Activated CD4-positive, alpha-beta T cell treated with anti-CD3 and anti-CD28 coated beads, Interleukin-2, amount 10 ng/mL, durations not matched to agents 24 days and 14 days (primary cell): ENCODE measurements at regions of chr2 and their contacts with region 1.

Region 1: DNA sequence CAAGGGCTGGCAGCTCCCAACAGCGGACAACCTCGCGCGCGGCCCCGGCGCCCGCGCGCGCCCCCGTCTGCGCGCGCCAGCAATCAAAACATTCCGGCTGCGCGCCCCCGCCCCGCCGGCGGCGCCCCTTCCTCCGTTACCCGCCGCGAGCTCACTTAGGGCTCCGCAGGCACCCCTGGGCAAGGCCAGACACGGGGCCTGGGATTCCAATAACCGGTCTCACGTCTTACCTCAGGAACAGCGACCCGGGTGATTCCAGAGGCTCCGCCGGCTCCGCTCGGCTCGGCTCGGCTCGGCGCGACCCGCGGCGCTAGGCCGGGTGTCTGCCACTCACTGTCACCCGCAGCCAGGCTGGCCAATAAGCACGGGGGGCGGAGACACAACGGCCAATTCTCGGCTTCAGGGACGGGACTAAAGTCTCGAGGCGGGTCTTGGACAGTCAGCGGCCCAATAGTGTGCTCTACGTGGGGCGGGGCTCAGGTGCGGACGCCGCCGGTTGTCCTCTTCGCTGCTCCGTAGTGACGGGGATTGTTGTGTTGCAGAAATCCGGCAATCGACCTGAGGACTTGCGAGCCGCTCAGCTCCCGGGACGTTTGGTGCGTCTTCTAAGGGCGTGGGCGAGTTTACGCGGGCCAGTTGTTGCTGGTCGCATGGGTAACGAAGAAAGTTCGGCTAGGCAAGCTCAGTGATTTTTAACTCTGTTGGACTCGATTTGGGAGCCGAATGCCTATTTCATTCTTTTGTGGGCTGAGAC is at the starts of genes ANKZF1 and ATG9A:
- DNase-seq: peak; percentile 100
- H3K4me3 Mint-ChIP-seq: peak within 1 kb of the TSS; percentile 92
- H3K27ac Mint-ChIP-seq: peak within 1 kb of the TSS; percentile 98
- H3K4me1 Mint-ChIP-seq: peaks cover 43% of the 10 kb centered on the region
- H3K27me3 Mint-ChIP-seq: no peaks in the 10 kb centered on the region
- total RNA-seq, gene ANKZF1: 144 and 149 TPM in 2 replicates
- total RNA-seq, gene ATG9A: 61.6 and 67.2 TPM in 2 replicates

Region 2: GRCh38 chr2:219206442-219207253 is 22.8 kb before region 1 on chr2 and contains the start of gene ZFAND2B:
- intact Hi-C with region 1: loop called (anchors 1 kb)
- DNase-seq: peak; percentile 99
- H3K4me3 Mint-ChIP-seq: peak within 1 kb of the TSS; percentile 83
- H3K27ac Mint-ChIP-seq: peak within 1 kb of the TSS; percentile 92
- H3K4me1 Mint-ChIP-seq: peaks cover 35% of the 10 kb centered on the region
- H3K27me3 Mint-ChIP-seq: no peaks in the 10 kb centered on the region
- total RNA-seq, gene ZFAND2B: 36.7 and 37.4 TPM in 2 replicates

Region 3: GRCh38 chr2:219245148-219245898 is 15.8 kb after region 1 on chr2 and contains the starts of genes GLB1L and STK16:
- intact Hi-C with region 1: loop called (anchors 1 kb)
- DNase-seq: peak; percentile 98
- H3K4me3 Mint-ChIP-seq: peak within 1 kb of the TSS; percentile 80
- H3K27ac Mint-ChIP-seq: peak within 1 kb of the TSS; percentile 99
- H3K4me1 Mint-ChIP-seq: peaks cover 58% of the 10 kb centered on the region
- H3K27me3 Mint-ChIP-seq: no peaks in the 10 kb centered on the region
- total RNA-seq, gene GLB1L: 4.6 and 4.9 TPM in 2 replicates
- total RNA-seq, gene STK16: 29.1 and 31.7 TPM in 2 replicates

Region 4: DNA sequence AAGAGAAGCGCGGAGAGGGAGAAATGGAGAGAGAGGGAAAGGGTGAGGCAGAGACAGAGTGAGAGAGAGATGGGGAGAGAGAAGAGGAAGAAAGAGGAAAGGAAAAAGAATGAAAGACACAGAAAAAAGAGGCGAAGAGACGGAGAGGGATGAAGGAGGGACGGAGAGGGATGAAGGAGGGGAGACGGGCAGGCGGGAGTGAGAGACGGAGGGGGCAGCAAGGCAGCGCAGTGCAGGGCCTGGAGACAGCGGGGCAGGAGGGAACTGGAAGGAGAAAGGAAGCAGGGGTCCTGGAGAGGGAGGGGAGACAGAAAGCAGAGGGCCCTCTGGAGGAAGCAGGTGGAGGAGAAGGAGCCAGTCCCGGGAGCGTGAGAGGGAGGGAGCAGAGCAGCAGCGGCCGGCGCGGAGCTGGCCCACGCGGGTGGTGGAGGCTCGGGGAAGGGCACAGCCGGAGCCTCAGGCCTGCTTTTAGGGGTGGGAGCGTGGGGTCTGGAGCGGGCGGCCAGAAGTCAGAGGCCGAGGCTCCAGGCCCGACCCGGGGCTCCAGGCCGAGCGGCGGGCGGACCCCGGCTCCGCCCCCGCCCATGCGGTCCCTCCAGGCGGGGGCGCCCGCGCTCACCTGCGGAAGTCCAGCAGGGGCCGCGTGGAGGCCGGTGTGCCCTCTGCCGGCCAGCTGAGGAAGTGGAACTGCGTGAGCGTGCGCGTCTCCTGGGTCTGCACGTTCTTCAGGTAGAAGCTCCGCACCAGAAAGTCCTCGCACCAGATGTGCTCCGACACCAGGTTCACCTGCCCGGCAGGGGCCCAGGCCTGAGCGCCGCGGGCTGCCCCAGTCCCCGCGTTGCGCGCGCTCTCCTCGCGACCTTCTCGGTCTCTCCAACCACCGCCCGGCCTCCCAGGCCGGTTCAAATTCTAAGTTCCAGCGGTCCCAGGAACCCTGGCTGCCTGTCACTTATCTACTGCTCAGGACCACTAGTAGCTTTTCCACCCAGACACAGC is 65.2 kb after region 1 on chr2:
- intact Hi-C with region 1: loop called (anchors 1 kb)
- DNase-seq: peak; percentile 97
- H3K4me3 Mint-ChIP-seq: peak overlapping the region; percentile 84
- H3K27ac Mint-ChIP-seq: peak overlapping the region; percentile 97
- H3K4me1 Mint-ChIP-seq: peaks cover 17% of the 10 kb centered on the region
- H3K27me3 Mint-ChIP-seq: peaks cover 6% of the 10 kb centered on the region